ENCODE measurements at regions of chr3 and their contacts with region 1.

Region 1: GRCh38 chr3:152376351-152377183 is 107.8 kb downstream of the MBNL1 start:
- DNase-seq: peak; percentile 29
- ATAC-seq: peak; percentile 91
- H3K4me3 Mint-ChIP-seq: peak overlapping the region; percentile 51
- H3K27ac Mint-ChIP-seq: peak overlapping the region; percentile 84
- H3K4me1 Mint-ChIP-seq: peaks cover 83% of the 10 kb centered on the region
- H3K27me3 Mint-ChIP-seq: no peaks in the 10 kb centered on the region
- CTCF ChIP-seq: no peak

Region 2: DNA sequence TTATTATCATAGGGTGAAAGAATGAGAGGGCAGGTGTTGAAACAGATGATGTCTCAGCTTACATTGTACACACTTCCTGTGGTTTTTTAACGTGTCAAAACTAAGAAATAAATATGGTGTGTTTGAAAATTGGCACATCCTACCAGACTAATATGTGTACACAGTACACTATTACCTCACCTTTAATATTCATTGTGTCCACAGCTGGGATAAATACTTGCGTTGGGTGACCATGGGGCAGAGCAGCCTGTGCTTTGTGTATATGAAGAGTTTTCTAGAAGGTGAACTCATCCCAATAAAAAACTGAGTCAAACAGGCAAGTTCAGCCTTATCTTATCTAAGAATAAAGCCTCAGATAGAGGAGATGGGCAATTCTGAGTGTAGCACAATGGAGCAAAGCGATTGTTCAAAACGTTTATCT is 485.8 kb before region 1 on chr3:
- CTCF ChIA-PET with region 1: no interaction called
- POLR2A ChIA-PET with region 1: no interaction called
- intact Hi-C with region 1: no loop called
- DNase-seq: no peak
- ATAC-seq: no peak
- H3K4me3 Mint-ChIP-seq: no peak overlapping the region
- H3K27ac Mint-ChIP-seq: no peak overlapping the region
- H3K4me1 Mint-ChIP-seq: peaks cover 2% of the 10 kb centered on the region
- H3K27me3 Mint-ChIP-seq: no peaks in the 10 kb centered on the region
- CTCF ChIP-seq: no peak

Region 3: GRCh38 chr3:152350139-152350538 is 26.4 kb before region 1 on chr3:
- CTCF ChIA-PET with region 1: interaction called, 3 read pairs
- POLR2A ChIA-PET with region 1: interaction called, 11 read pairs
- intact Hi-C with region 1: loop called (anchors 1 kb)
- DNase-seq: no peak
- ATAC-seq: no peak
- H3K4me3 Mint-ChIP-seq: no peak overlapping the region
- H3K27ac Mint-ChIP-seq: no peak overlapping the region
- H3K4me1 Mint-ChIP-seq: peaks cover 29% of the 10 kb centered on the region
- H3K27me3 Mint-ChIP-seq: no peaks in the 10 kb centered on the region
- CTCF ChIP-seq: no peak

Region 4: DNA sequence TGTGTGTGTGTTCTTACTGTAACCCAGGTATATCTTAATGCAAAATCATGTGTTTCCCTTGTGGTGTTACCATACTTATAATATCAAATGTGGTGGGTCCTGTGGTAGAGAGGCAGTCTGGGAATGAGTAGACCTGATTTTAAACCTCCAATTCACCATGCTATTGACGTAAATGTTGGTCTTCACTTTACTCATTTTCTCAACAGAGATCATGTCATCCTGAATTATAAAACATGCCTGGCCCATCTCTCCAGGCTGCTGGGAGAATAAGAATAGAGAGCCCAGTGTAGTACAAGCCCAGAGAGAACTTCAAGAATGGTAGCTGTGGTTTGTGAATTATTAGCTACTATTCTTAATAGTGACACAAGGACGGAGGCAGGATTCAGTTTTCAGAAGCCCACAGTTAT is 19.7 kb before region 1 on chr3:
- CTCF ChIA-PET with region 1: interaction called, 3 read pairs
- POLR2A ChIA-PET with region 1: interaction called, 11 read pairs
- intact Hi-C with region 1: loop called (anchors 1 kb)
- DNase-seq: no peak
- ATAC-seq: peak; percentile 51
- H3K4me3 Mint-ChIP-seq: no peak overlapping the region
- H3K27ac Mint-ChIP-seq: peak overlapping the region; percentile 70
- H3K4me1 Mint-ChIP-seq: peaks cover 74% of the 10 kb centered on the region
- H3K27me3 Mint-ChIP-seq: no peaks in the 10 kb centered on the region
- CTCF ChIP-seq: no peak

Region 5: DNA sequence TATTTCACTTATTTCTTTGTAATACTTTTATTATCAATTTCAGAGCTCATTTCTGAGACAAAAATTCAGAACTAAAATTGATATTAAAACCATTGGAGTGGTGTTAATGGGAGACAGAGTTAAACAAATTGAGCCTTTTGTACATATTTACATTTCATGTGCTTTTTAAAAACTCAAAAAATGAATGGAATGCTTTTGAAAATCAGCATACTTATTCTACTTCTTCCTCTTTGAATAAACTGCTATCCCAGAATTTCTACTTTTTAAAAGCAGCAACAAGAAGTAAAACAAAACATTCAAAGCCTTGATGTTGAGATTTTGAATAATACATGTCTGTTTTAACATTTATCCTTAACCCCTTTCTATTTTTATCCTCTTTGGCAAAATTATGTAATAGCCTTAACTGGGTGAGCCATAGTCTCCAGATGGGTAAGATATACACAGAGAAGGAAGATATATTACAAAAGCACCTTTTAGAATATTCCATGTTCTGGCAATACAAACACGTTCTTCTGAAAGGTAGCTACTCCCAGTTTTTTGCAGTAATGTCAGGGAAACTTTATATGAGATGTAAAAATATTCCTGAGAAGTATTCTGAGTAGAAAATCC is 15.8 kb after region 1 on chr3:
- CTCF ChIA-PET with region 1: no interaction called
- POLR2A ChIA-PET with region 1: interaction called, 3 read pairs
- intact Hi-C with region 1: loop called (anchors 1 kb)
- DNase-seq: no peak
- ATAC-seq: no peak
- H3K4me3 Mint-ChIP-seq: no peak overlapping the region
- H3K27ac Mint-ChIP-seq: no peak overlapping the region
- H3K4me1 Mint-ChIP-seq: peaks cover 50% of the 10 kb centered on the region
- H3K27me3 Mint-ChIP-seq: no peaks in the 10 kb centered on the region
- CTCF ChIP-seq: no peak

Region 6: GRCh38 chr3:152466784-152467183 is 90.2 kb after region 1 on chr3:
- CTCF ChIA-PET with region 1: no interaction called
- POLR2A ChIA-PET with region 1: no interaction called
- intact Hi-C with region 1: no loop called
- DNase-seq: no peak
- ATAC-seq: peak; percentile 69
- H3K4me3 Mint-ChIP-seq: no peak overlapping the region
- H3K27ac Mint-ChIP-seq: peak overlapping the region; percentile 71
- H3K4me1 Mint-ChIP-seq: peaks cover 22% of the 10 kb centered on the region
- H3K27me3 Mint-ChIP-seq: no peaks in the 10 kb centered on the region
- CTCF ChIP-seq: no peak

Region 7: DNA sequence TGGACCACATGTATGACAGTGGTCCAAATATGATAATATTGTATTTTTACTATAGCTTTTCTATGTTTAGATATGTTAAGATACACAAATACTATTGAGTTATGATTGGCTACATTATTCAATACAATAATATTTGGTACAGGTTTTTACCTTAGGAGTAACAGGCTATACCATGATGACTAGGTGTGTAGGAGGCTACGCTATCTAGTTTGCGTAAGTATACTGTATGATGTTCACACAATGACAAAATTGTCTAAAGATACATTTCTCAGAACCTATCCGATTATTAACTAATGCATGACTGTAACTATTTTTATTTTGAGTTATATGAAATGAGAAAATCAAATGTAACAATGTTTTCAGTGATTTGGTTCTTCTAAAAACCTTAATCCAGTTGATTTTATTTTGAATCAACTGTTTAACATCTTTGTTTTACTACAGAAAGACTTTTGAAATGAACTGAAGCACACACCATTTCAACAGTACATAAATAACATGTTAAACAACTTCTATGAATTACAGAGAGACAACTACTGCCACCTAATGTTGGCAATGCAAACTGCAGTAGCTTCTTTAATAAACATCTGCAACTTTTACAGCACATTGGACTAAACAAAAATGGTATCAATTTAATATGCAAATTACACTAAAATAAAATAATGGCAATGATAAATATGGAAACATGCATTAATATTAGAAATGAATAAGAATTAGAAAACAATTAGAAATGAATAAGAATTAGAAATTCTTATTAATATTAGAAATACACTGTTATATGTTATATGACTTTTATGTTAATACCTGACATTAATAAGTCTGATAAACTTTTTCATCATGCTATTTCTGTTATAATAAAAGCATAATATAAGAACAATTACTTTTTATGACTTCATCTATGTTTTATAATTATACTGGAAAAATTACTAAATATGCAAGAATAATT is 147.9 kb after region 1 on chr3:
- CTCF ChIA-PET with region 1: no interaction called
- POLR2A ChIA-PET with region 1: no interaction called
- intact Hi-C with region 1: loop called (anchors 5 kb)
- DNase-seq: no peak
- ATAC-seq: peak; percentile 77
- H3K4me3 Mint-ChIP-seq: no peak overlapping the region
- H3K27ac Mint-ChIP-seq: no peak overlapping the region
- H3K4me1 Mint-ChIP-seq: peaks cover 33% of the 10 kb centered on the region
- H3K27me3 Mint-ChIP-seq: no peaks in the 10 kb centered on the region
- CTCF ChIP-seq: peak; percentile 96

Region 8: GRCh38 chr3:152595975-152596790 is 219.6 kb after region 1 on chr3:
- CTCF ChIA-PET with region 1: no interaction called
- POLR2A ChIA-PET with region 1: interaction called, 15 read pairs
- intact Hi-C with region 1: no loop called
- DNase-seq: no peak
- ATAC-seq: peak; percentile 96
- H3K4me3 Mint-ChIP-seq: peak overlapping the region; percentile 79
- H3K27ac Mint-ChIP-seq: peak overlapping the region; percentile 98
- H3K4me1 Mint-ChIP-seq: peaks cover 29% of the 10 kb centered on the region
- H3K27me3 Mint-ChIP-seq: no peaks in the 10 kb centered on the region
- CTCF ChIP-seq: no peak